ENCODE measurements at regions of chr5 and their contacts with region 1.

Region 1: DNA sequence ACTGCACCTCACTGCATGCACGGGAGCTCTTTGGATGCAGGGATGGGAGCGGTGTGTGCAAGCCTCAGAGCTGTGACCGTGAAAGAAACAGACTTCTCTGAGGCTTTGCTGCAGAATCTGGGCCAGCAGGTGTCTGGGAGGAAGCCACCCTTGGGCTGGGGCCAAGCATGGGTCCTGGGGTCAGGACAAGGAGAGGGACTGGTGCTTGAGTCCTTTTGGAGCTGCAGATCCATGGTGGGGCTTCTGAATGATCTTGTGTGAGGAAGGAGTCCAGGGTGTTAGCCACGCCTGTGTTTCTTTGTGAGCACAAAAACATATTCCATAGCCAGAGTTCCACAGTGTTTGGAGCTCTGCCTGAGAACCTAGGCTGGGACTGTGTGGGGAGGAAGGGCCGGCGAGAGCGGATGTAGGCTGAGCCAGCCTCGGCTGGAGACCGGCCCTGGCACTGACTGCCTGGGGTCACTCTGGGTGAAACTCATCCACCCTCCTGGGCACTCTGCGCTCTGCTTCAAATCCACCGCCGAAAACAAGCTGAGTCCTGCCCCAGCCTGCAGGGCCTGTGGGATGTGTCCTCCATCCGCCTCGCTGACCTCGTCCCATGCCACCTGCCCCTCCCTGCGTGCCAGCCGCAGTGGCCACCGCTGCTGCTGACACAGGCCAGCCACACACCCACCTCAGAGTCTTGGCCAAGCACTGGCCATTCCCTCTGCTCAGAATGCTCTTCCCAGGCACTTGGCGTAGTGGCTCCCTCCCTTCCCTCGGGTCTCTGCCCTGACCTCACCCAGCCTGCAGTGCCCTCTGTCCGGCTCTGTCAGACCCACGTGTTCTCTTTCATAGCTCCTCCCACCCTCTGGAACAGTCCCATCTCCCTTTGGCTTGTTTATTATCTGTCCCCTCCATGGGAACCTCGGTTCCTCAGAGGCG is 26.7 kb downstream of the ERGIC1 start:
- DNase-seq: peak; percentile 91
- ATAC-seq: peak; percentile 93

Region 2: GRCh38 chr5:172806897-172807672 is 53.7 kb before region 1 on chr5:
- intact Hi-C with region 1: no loop called
- DNase-seq: peak; percentile 94
- ATAC-seq: peak; percentile 97

Region 3: GRCh38 chr5:172833686-172834414 is 26.9 kb before region 1 on chr5 and contains the start of gene ERGIC1:
- intact Hi-C with region 1: loop called (anchors 2 kb)
- DNase-seq: peak; percentile 95
- ATAC-seq: peak; percentile 94
- total RNA-seq, gene ERGIC1: 74.8 TPM